ENCODE measurements at regions of chr20 and their contacts with region 1.

Region 1: DNA sequence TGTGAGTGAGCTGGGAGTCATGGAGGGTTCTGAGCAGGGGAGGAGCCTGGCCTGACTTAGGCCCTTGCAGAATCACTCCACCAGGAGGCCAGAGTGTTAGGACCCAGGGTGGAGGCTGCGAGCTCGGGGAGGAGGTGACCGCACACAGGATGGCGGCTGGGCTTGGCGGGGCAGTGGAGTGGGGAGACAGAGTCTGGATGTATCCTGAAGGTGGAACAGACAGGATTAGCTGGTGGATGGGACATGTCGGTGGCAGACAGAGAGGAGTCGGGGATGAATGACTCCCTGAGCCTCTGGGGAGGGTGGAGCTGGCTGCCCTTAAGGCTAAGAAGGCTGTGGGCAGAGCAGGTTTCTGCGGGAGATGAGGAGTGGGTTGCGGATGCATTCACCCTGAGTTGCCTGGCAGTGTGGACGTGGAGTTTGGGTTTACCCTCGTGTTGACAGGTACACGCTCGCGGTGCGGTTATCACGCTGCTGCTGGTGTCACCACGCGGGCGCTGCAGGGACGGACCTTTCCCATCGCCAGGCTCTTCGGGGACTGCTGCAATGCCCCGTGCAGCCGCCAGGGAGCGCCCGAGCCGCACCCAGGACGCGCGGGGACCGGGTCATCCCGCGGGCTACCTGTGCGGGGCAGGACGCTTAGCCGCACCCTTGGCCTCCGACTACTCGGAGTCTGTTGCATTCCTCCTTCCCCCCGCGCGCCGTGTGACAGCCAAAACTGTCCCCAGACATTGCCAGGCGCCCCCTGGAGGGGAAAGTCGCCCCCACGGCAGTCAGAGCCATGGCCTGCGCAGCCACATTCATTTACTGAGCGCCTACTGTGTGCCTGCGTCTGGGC is 43.0 kb upstream of the PTGIS start:
- DNase-seq: peak; percentile 81
- ATAC-seq: peak; percentile 87
- H3K4me3 Mint-ChIP-seq: peak overlapping the region; percentile 68
- H3K27ac Mint-ChIP-seq: no peak overlapping the region
- H3K4me1 Mint-ChIP-seq: peaks cover 21% of the 10 kb centered on the region
- H3K27me3 Mint-ChIP-seq: peaks cover 12% of the 10 kb centered on the region
- CTCF ChIP-seq: peak; percentile 79

Region 2: DNA sequence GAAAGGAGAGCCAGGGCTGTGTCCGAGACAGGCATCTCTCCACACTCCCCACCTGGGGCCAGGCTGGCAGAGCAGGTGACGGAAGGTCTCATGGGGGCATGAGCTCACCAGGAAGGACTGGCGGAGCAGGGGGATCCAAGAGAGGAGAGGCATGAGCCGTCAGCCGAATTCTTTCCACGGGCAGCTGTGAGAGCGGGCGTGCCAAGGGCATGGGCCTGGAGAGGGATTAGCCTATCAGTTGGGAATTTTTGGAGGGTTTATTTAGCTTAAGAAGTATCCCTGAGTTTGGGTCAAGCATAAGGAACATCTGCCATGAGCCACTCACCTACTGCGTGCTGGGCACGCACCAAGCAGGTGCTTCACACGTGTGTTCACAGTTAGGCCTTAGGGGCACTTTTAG is 272.9 kb before region 1 on chr20:
- CTCF ChIA-PET with region 1: interaction called, 9 read pairs
- POLR2A ChIA-PET with region 1: no interaction called
- intact Hi-C with region 1: loop called (anchors 1 kb)
- DNase-seq: no peak
- ATAC-seq: no peak
- H3K4me3 Mint-ChIP-seq: no peak overlapping the region
- H3K27ac Mint-ChIP-seq: no peak overlapping the region
- H3K4me1 Mint-ChIP-seq: no peaks in the 10 kb centered on the region
- H3K27me3 Mint-ChIP-seq: peaks cover 16% of the 10 kb centered on the region
- CTCF ChIP-seq: no peak

Region 3: DNA sequence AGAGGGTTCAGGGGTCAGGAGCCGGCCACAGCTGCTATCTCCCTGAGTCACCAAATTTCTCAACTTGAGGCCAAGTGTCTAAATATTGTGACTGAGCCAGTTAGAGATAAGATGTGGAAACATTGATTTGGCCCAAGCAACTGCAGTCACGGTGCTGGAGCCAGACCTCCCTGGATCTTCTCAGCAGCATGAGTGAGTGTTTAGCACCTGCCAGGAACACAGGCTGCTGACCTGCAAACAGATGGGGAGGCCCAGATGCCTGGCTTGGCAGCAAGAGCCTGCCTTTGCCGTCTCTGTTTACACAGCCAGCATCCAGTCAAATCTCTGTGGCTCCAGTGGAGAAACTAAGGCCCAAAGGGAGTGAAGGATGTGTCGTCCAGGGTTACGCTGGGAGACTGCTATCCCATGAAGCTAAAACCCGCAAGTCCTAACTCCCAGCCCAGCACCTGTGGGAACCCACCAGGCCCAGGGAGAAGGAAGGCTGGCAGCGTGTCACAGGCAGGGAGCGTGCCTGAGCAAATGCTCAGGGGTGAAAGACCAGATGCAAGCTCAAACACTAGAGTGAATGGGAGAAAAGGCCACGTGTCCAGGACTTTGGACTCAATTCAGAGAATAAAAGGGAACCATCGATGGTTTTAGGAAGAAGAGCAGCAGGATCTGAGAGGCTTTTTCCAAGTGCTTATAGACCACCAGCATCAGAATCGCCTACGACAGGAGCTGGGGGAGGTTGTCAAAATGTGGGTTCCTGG is 27.1 kb before region 1 on chr20:
- CTCF ChIA-PET with region 1: no interaction called
- POLR2A ChIA-PET with region 1: no interaction called
- intact Hi-C with region 1: no loop called
- DNase-seq: no peak
- ATAC-seq: no peak
- H3K4me3 Mint-ChIP-seq: no peak overlapping the region
- H3K27ac Mint-ChIP-seq: no peak overlapping the region
- H3K4me1 Mint-ChIP-seq: no peaks in the 10 kb centered on the region
- H3K27me3 Mint-ChIP-seq: peaks cover 17% of the 10 kb centered on the region
- CTCF ChIP-seq: no peak

Region 4: DNA sequence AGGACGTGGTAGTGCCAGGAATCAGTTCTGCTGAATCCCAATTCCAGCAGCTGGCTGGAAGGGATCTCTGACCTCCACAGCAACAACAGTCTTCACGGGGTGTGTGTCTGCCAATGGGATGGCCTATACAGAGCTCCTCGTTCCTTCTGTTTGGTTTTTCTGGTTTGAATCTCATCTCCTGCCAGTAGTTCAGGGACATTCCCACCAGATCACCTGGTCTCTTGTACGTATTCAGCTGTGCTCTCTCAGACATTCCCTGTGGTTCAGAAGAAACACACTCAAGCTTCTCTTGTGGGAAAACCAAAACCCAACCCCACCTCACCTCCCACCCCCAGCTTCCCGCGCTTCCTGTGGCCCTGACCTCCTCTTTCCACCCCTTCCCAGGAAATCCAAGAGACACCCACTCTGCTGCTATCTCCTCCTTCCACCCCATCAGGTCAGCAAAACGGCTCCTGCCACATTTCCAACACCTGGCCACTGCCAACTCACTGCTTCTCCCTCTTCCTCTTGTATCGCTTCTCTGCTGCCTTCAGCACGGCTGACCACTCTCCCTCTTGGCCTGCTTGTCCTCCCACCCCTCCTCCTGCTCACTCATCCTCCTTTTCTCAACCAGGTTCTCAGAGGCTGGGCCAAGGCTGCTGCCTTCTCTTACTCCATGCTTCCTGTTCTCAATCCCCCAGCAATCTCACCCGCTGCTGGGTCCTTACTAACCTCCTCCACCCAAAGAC is 20.3 kb after region 1 on chr20:
- CTCF ChIA-PET with region 1: interaction called, 8 read pairs
- POLR2A ChIA-PET with region 1: interaction called, 3 read pairs
- intact Hi-C with region 1: loop called (anchors 1 kb)
- DNase-seq: no peak
- ATAC-seq: peak; percentile 32
- H3K4me3 Mint-ChIP-seq: peak overlapping the region; percentile 32
- H3K27ac Mint-ChIP-seq: peak overlapping the region; percentile 62
- H3K4me1 Mint-ChIP-seq: peaks cover 56% of the 10 kb centered on the region
- H3K27me3 Mint-ChIP-seq: peaks cover 1% of the 10 kb centered on the region
- CTCF ChIP-seq: no peak

Region 5: GRCh38 chr20:49821870-49822331 is 211.0 kb after region 1 on chr20:
- CTCF ChIA-PET with region 1: interaction called, 20 read pairs
- POLR2A ChIA-PET with region 1: no interaction called
- intact Hi-C with region 1: loop called (anchors 1 kb)
- DNase-seq: no peak
- ATAC-seq: no peak
- H3K4me3 Mint-ChIP-seq: peak overlapping the region; percentile 24
- H3K27ac Mint-ChIP-seq: peak overlapping the region; percentile 76
- H3K4me1 Mint-ChIP-seq: peaks cover 48% of the 10 kb centered on the region
- H3K27me3 Mint-ChIP-seq: no peaks in the 10 kb centered on the region
- CTCF ChIP-seq: no peak

Region 6: DNA sequence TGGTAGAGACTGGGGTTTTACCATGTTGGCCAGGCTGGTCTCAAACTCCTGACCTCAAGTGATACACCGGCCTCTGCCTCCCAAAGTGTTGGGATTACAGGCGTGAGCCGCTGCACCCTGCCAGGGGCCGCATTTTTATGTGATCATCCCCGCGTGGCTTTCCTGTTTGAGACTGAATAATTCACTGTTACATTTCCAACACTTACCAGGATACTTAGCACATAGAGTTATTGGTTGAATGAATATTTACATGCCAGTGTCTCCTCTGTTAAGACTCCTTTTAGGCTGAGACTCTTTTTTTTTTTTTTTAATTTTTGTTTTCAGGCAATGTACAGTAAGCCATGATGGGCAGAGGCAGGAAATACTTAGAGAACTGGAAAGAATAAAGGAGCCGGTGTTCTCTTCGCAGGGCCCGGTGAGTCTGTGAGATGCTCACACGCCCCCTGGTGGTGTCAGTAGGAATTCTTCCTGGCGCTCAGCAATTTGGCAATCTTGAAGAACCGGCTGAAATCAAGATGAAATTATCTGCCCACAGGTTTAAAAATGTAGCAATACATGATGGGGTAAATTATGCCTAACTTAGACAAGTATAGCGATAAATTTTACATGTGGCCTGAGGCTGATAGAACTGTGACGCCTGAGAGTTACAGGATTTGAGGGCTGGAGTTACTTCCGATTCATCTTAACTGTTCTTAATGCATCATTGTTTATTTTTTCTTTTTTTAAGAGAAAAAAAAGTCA is 317.7 kb after region 1 on chr20:
- CTCF ChIA-PET with region 1: no interaction called
- POLR2A ChIA-PET with region 1: no interaction called
- intact Hi-C with region 1: loop called (anchors 1 kb)
- DNase-seq: peak; percentile 48
- ATAC-seq: peak; percentile 85
- H3K4me3 Mint-ChIP-seq: no peak overlapping the region
- H3K27ac Mint-ChIP-seq: no peak overlapping the region
- H3K4me1 Mint-ChIP-seq: peaks cover 4% of the 10 kb centered on the region
- H3K27me3 Mint-ChIP-seq: no peaks in the 10 kb centered on the region
- CTCF ChIP-seq: peak; percentile 59

Measured in activated B cell treated with CpG ODN at 0.5 μM for 24 hours (primary cell).